GM10248 (cell line): ENCODE measurements at regions of chr3 and their contacts with region 1.

Region 1: GRCh38 chr3:13091898-13092611 is 18.8 kb upstream of the IQSEC1 start:
- DNase-seq: peak; percentile 85
- CTCF ChIP-seq: peak; percentile 94

Region 2: DNA sequence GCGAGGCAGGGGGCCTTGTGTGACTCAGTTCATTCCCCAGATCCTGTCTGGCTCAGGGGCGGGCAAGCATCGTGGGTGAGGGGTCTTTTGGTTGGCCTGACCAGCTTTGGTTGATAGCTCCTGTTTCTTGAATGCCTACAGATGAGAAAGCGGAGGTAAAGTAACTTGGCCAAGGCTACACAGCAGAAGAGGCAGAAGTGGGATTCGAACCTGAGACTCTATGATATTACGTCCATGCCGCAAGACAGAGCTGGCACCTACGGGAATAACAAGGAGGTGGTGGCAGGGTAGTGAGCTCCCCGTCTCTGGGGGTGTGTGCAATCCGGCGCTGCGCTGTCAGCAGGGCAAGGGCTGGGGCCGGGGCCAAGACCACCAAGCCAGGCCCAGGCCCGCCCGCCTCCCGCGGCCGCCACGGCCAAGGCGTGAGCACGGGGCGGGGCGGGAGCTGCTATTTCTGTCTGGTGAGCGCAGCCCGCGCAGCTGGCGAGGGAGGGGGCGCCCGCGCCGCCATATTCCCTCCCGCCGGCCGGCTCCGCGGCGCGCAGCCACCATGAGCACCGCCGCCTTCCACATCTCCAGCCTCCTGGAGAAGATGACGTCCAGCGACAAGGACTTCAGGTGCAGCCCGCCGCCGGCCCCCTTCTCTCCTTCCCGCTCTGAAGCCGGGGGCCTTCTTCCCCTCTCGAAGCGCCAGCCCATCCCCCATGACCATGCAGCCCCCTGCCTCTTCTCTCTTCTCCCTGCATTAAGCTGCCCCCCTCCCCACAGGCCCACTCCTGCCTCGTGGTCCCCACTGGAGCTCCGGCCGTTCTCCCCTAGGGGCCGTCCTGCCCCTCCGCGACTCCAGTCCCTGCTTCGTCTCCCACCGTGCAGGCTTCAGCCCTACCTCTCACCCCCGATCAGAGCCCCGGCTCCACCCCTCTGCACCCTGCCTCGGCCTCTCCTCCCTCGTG is 295.6 kb before region 1 on chr3 and contains the start of gene CAND2:
- CTCF ChIA-PET with region 1: no interaction called
- POLR2A ChIA-PET with region 1: no interaction called
- DNase-seq: peak; percentile 43
- CTCF ChIP-seq: no peak

Region 3: GRCh38 chr3:13064159-13064868 is 27.7 kb before region 1 on chr3:
- CTCF ChIA-PET with region 1: interaction called, 18 read pairs
- POLR2A ChIA-PET with region 1: no interaction called
- DNase-seq: no peak
- CTCF ChIP-seq: no peak

Region 4: DNA sequence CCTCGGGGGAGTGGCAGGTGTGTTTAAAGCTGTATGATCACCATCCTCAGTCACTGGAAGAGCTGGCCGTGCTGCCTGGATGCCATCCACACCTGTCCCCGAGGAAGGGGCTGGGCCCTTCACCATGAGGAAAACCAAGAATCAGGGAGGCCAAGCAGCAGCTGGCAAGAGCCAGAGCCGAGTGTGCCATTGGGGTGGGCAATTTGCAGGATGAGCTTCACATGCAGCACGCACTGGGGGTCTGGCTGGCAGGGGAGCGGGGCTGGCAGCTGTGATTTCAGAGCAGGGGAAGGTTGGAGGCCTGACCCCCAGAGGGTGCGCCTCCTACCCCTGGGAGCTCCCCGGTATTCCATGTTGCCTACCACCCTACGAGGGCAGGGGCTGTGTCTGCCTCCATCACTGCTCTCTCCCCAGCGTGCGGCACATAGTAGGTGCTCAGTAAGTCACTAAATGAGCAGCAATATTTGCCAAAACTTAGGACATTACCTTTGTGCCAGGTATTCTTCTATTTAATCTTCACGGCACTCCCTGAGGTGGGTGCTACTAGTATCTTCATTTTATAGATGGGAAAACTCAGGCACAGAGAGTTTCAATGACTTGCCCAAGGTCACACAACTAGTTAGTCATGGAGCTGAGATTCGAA is 11.5 kb after region 1 on chr3:
- CTCF ChIA-PET with region 1: interaction called, 18 read pairs
- POLR2A ChIA-PET with region 1: no interaction called
- DNase-seq: no peak
- CTCF ChIP-seq: no peak

Region 5: GRCh38 chr3:13133471-13133981 is 41.5 kb after region 1 on chr3:
- CTCF ChIA-PET with region 1: interaction called, 10 read pairs
- POLR2A ChIA-PET with region 1: interaction called, 6 read pairs
- DNase-seq: no peak
- CTCF ChIP-seq: no peak

Region 6: GRCh38 chr3:13479581-13480339 is 387.7 kb after region 1 on chr3 and contains the start of gene HDAC11:
- CTCF ChIA-PET with region 1: interaction called, 17 read pairs
- POLR2A ChIA-PET with region 1: no interaction called
- DNase-seq: peak; percentile 100
- CTCF ChIP-seq: peak; percentile 6